Prostate gland (tissue), 2 donors: ENCODE measurements at regions of chr9 and their contacts with region 1.

Region 1: GRCh38 chr9:70639853-70640814 is 225.7 kb upstream of the KLF9 start:
- DNase-seq: peak; percentile 30
- H3K4me3 ChIP-seq: no peak overlapping the region
- H3K27ac ChIP-seq: no peak overlapping the region
- H3K4me1 ChIP-seq: no peaks in the 10 kb centered on the region
- H3K27me3 ChIP-seq: no peaks in the 10 kb centered on the region
- CTCF ChIP-seq: peak; percentile 21 to 80 (median 68)
- POLR2A ChIP-seq: no peak

Region 2: GRCh38 chr9:71001780-71002386 is 361.7 kb after region 1 on chr9:
- intact Hi-C with region 1: loop called (anchors 5 kb)
- DNase-seq: peak; percentile 29
- H3K4me3 ChIP-seq: no peak overlapping the region
- H3K27ac ChIP-seq: no peak overlapping the region
- H3K4me1 ChIP-seq: no peaks in the 10 kb centered on the region
- H3K27me3 ChIP-seq: no peaks in the 10 kb centered on the region
- CTCF ChIP-seq: peak in 3 of 4 experiments; percentile 63 to 73 (median 69)
- POLR2A ChIP-seq: no peak

Region 3: DNA sequence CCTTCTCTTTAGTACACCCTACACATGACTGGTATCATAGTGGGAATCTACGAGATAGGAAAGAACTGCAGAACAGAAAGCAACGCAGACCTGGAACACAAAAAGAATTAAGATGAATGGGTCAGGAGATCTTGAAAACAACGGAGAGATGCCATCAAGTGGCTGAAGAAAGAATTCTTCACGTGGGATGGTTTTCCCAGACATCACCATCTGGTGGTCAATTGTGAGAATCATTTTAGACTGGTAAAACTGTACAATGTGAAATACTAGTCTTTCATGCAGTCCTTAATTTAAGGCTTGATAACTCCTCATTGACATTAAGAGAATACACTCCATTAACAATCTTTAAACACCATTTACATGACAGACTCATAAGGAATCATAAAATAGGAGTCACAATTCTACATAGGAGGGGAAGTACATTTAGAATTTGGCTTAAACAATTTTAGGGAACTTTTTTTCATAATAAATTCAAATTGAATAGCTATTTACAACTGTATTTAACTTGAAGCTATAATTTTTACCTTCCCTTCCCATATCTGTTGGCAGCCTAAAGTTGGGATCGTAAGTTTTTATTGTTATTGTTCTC is 609.7 kb after region 1 on chr9:
- intact Hi-C with region 1: loop called (anchors 1 kb)
- DNase-seq: peak; percentile 31
- H3K4me3 ChIP-seq: no peak overlapping the region
- H3K27ac ChIP-seq: no peak overlapping the region
- H3K4me1 ChIP-seq: no peaks in the 10 kb centered on the region
- H3K27me3 ChIP-seq: no peaks in the 10 kb centered on the region
- CTCF ChIP-seq: peak; percentile 67 to 84 (median 78)
- POLR2A ChIP-seq: no peak